ENCODE measurements at regions of chr11 and their contacts with region 1.

Region 1: GRCh38 chr11:5291207-5291838 is 10.4 kb downstream of the OR51B4 start:
- DNase-seq: peak; percentile 65 to 70 (median 69)
- H3K4me3 ChIP-seq: no peak overlapping the region
- H3K27ac ChIP-seq: no peak overlapping the region
- H3K4me1 ChIP-seq: peaks cover 0 to 6% (median 0%) of the 10 kb centered on the region in 4 experiments
- H3K27me3 ChIP-seq: no peaks in the 10 kb centered on the region

Region 2: GRCh38 chr11:4740735-4741134 is 550.6 kb before region 1 on chr11:
- CTCF ChIA-PET with region 1: no interaction called
- POLR2A ChIA-PET with region 1: no interaction called
- DNase-seq: no peak
- H3K4me3 ChIP-seq: no peak overlapping the region
- H3K27ac ChIP-seq: no peak overlapping the region
- H3K4me1 ChIP-seq: no peaks in the 10 kb centered on the region
- H3K27me3 ChIP-seq: no peaks in the 10 kb centered on the region

Region 3: DNA sequence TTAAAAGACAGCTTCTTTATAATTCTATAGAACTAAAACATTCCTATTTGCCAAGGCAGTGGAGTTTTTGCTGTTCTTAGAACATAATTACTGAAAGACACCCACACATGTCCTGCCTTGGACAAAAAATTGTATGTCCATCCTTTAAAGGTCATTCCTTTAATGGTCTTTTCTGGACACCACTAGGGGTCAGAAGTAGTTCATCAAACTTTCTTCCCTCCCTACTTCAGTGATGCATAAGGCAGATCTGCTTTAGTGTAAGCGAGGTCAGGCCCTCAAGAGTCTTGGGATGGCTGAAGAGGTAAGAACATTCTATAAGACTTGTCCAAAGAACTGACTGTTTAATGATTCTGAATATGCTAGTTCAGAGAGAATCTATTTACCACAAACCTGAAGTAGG is 86.5 kb before region 1 on chr11:
- CTCF ChIA-PET with region 1: interaction called, 67 read pairs
- POLR2A ChIA-PET with region 1: no interaction called
- DNase-seq: peak; percentile 57 to 61 (median 57)
- H3K4me3 ChIP-seq: no peak overlapping the region
- H3K27ac ChIP-seq: no peak overlapping the region
- H3K4me1 ChIP-seq: no peaks in the 10 kb centered on the region
- H3K27me3 ChIP-seq: no peaks in the 10 kb centered on the region

Region 4: DNA sequence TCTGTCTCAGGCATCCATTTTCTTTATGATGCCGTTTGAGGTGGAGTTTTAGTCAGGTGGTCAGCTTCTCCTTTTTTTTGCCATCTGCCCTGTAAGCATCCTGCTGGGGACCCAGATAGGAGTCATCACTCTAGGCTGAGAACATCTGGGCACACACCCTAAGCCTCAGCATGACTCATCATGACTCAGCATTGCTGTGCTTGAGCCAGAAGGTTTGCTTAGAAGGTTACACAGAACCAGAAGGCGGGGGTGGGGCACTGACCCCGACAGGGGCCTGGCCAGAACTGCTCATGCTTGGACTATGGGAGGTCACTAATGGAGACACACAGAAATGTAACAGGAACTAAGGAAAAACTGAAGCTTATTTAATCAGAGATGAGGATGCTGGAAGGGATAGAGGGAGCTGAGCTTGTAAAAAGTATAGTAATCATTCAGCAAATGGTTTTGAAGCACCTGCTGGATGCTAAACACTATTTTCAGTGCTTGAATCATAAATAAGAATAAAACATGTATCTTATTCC is 10.7 kb before region 1 on chr11:
- CTCF ChIA-PET with region 1: interaction called, 23 read pairs
- POLR2A ChIA-PET with region 1: no interaction called
- DNase-seq: peak; percentile 99 to 100 (median 100)
- H3K4me3 ChIP-seq: no peak overlapping the region
- H3K27ac ChIP-seq: peak overlapping the region; percentile 35 to 69
- H3K4me1 ChIP-seq: peaks cover 0 to 32% (median 17%) of the 10 kb centered on the region in 4 experiments
- H3K27me3 ChIP-seq: no peaks in the 10 kb centered on the region

Measured in common myeloid progenitor, CD34-positive (primary cell).